ENCODE measurements at regions of chr12 and their contacts with region 1.

Region 1: DNA sequence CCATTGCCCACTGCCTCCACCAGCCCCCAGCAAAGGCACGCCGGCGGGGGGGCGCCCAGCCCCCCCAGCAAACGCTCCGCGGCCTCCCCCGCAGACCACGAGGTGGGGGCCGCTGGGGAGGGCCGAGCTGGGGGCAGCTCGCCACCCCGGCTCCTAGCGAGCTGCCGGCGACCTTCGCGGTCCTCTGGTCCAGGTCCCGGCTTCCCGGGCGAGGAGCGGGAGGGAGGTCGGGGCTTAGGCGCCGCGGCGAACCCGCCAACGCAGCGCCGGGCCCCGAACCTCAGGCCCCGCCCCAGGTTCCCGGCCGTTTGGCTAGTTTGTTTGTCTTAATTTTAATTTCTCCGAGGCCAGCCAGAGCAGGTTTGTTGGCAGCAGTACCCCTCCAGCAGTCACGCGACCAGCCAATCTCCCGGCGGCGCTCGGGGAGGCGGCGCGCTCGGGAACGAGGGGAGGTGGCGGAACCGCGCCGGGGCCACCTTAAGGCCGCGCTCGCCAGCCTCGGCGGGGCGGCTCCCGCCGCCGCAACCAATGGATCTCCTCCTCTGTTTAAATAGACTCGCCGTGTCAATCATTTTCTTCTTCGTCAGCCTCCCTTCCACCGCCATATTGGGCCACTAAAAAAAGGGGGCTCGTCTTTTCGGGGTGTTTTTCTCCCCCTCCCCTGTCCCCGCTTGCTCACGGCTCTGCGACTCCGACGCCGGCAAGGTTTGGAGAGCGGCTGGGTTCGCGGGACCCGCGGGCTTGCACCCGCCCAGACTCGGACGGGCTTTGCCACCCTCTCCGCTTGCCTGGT is at the start of gene CDKN1B:
- DNase-seq: peak; percentile 96
- total RNA-seq, gene CDKN1B: 29.5 TPM

Region 2: DNA sequence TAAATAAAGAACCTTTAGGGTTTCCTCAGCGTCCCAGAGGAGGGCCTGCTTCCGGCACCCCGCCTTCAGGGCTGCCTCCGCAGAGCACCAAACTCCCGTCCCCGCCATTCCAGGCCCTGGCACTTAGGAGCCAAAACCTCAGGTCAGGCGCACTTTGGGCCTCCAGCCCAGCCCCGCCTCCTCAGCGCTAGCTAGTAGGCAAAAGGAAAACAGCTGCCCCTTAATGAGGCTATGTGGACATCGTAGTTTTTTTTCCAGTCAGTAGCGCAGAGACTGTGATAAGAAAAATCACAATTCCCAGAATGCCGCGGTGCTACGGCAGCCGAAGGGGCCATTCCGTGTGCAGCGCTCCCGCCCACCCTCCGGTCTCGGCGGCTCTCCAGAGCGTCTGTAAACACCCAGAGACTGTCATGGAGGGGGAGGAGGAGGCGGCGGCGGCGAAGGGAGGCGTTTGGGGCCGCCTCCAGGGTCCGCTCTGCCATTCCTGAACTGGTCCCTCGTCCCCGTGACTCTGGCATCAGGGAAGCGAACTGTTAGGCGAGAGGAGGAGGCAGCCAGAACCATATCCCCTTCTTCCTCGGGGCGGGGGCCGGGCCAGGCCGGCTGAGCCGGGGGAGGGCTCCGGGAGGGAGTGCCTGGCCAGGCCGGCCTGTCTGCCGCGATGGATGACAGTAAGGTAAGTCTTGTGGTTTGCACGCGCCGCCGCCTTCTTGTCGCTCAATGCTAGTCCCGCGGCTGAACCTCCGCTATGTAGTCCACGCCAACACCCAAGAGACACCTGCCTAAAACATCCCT is 105.3 kb before region 1 on chr12 and contains the start of gene CREBL2:
- intact Hi-C with region 1: loop called (anchors 5 kb)
- DNase-seq: peak; percentile 95
- total RNA-seq, gene CREBL2: 20.0 TPM

Region 3: DNA sequence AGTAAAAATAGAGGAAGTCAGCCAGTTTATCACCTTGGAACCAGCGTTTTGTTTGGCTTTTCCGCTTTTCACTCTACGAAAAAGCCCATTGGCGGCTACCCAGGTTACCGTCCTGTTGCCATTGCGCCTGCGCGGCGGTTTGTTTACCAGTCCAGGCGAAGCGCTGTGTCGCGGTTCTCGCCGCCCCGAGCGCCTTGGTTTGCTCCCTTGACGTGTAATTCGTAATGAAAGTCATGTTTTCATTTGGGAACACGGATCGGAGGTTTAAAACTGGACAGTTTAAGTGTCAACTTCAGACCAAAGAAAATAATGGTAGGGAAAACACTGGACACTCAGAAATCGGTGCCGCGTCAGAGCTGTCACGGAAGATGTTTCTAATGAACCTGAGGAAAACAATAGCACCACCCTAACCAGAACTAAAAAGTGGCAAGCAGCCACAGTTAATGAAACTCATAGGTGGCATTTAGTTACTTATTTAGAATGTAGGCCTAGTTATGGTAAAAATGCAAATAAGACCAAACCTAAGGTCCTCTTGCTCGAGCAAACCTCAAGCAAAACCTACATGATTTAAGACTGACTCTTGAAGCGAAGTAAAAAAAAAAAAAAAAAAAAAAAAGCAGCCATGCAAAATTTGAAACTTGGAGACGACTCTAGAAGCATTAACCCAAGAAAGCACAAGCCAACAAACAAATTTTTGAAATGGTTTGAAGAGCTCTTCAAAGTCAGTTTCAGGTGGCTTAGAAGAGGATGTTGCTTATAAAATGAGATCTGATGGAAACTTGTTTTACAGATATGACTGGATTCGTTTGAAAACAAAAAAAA is 20.2 kb before region 1 on chr12:
- intact Hi-C with region 1: loop called (anchors 1 kb)
- DNase-seq: peak; percentile 96

Region 4: DNA sequence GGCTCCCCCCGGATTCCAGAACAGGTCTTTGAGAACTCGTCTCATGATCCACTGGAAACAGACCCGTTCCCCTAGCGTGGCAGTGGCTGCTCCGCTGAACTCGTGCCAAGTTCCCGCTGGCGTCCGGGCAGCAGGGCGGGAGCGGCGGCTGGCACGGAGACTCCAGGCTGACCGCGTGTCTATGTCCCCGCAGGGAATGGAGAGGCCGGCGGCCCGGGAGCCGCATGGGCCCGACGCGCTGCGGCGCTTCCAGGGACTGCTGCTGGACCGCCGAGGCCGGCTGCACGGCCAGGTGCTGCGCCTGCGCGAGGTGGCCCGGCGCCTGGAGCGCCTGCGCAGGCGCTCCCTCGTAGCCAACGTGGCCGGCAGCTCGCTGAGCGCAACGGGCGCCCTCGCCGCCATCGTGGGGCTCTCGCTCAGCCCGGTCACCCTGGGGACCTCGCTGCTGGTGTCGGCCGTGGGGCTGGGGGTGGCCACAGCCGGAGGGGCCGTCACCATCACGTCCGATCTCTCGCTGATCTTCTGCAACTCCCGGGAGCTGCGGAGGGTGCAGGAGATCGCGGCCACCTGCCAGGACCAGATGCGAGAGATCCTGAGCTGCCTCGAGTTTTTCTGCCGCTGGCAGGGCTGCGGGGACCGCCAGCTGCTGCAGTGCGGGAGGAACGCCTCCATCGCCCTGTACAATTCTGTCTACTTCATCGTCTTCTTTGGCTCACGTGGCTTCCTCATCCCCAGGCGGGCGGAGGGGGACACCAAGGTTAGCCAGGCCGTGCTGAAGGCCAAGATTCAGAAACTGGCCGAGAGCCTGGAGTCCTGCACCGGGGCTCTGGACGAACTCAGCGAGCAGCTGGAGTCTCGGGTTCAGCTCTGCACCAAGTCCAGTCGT is 70.0 kb after region 1 on chr12:
- intact Hi-C with region 1: loop called (anchors 2 kb)
- DNase-seq: peak; percentile 90

Measured in cardiac septum (tissue), 1 donor.